CD14-positive monocyte (primary cell): ENCODE measurements at regions of chr6 and their contacts with region 1.

Region 1: DNA sequence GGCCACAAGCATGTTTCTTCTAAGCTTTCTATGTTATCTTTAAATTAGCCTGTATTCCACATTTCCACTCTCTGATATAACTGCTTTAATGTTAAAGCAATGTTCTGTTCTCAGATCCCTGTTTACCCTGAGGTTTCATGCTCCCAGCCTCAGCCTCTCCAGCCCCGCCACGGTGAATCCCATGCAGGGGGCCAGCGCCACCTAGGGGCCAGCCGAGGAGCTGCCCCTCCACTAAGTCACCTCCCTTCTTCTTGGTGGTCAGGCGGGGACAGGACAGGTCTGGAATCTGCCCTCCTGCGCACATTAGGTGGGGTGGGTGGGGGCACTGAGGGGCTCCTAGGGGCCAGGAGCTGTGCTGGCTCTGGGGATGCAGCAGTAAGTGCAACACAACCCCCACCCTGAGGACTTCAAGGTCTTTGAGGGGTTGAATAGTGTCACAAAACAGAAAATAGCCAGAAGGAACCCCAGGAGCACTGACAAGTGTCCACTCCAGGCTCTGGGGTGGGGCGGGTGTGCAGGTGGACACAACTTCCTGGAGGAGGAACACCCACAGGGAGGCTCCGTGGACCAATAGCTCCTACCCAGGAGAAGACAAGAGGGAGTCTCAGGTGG is 61.6 kb downstream of the RAB44 start:
- DNase-seq: peak; percentile 78 to 82 (median 78)
- H3K4me3 ChIP-seq: no peak overlapping the region
- H3K4me3 Mint-ChIP-seq: no peak overlapping the region
- H3K27ac ChIP-seq: no peak overlapping the region
- H3K27ac Mint-ChIP-seq: peak overlapping the region in 5 of 7 donors; percentile 39 to 84 (median 79)
- H3K4me1 ChIP-seq: peaks cover 42 to 44% of the 10 kb centered on the region in 2 donors
- H3K4me1 Mint-ChIP-seq: peaks cover 49% of the 10 kb centered on the region
- H3K27me3 ChIP-seq: no peaks in the 10 kb centered on the region
- H3K27me3 Mint-ChIP-seq: peaks cover 0 to 9% (median 2%) of the 10 kb centered on the region in 3 donors
- CTCF ChIP-seq: peak; percentile 97

Region 2: DNA sequence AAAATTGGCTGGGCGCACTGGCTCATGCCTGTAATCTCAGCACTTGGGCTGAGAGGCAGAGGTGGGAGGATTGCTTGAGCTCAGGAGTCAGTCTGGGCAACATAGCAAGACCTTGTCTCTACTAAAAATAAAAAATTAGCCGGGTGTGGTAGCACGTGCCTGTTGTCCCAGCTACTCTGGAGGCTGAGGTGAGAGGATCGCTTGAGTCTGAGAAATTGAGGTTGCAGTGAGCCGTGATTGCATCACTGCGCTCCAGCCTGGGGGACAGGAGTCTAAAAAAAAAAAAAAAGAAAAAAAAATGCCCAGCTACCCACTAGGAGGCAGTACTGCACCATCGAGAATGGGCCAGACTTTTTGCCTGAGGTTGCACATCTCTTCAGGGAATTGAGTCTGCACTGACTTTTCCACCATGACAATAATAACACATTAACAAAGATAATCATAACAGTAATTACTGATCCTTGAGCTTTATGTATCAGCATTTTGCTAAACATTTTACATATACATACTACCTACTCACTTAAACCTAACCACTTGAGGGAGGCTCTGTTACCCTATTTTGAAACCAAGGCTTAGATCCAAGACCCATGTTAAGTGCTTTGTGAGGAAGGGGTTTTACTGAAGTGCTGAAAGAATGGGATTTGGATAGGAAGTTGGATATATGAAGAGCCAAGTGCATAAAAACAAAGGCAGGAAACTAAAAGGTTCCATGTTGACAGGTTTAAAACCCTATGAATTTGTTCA is 144.1 kb before region 1 on chr6:
- intact Hi-C with region 1: loop called (anchors 2 to 5 kb)
- DNase-seq: peak; percentile 79 to 82 (median 82)
- H3K4me3 ChIP-seq: no peak overlapping the region
- H3K4me3 Mint-ChIP-seq: no peak overlapping the region
- H3K27ac ChIP-seq: no peak overlapping the region
- H3K27ac Mint-ChIP-seq: peak overlapping the region; percentile 28 to 83 (median 71)
- H3K4me1 ChIP-seq: peaks cover 24 to 38% of the 10 kb centered on the region in 2 donors
- H3K4me1 Mint-ChIP-seq: peaks cover 33% of the 10 kb centered on the region
- H3K27me3 ChIP-seq: no peaks in the 10 kb centered on the region
- H3K27me3 Mint-ChIP-seq: no peaks in the 10 kb centered on the region
- CTCF ChIP-seq: peak; percentile 84

Region 3: DNA sequence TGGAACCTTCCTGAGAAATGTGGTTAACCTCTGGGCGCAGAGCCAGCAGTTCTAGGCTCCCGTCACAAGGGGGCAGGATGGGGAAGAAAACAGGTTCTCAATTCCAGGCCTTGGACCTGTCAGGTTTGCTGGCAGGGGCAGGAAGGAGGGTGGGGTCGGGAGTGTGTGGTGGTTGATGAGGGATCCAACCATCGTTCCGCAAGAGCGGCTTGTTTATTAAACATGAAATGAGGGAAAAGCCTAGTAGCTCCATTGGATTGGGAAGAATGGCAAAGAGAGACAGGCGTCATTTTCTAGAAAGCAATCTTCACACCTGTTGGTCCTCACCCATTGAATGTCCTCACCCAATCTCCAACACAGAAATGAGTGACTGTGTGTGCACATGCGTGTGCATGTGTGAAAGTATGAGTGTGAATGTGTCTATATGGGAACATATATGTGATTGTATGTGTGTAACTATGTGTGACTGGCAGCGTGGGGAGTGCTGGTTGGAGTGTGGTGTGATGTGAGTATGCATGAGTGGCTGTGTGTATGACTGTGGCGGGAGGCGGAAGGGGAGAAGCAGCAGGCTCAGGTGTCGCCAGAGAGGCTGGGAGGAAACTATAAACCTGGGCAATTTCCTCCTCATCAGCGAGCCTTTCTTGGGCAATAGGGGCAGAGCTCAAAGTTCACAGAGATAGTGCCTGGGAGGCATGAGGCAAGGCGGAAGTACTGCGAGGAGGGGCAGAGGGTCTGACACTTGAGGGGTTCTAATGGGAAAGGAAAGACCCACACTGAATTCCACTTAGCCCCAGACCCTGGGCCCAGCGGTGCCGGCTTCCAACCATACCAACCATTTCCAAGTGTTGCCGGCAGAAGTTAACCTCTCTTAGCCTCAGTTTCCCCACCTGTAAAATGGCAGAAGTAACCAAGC is 135.5 kb before region 1 on chr6:
- intact Hi-C with region 1: loop called (anchors 2 to 5 kb)
- DNase-seq: peak; percentile 70 to 81 (median 77)
- H3K4me3 ChIP-seq: peak overlapping the region in 1 of 3 experiments; percentile 51
- H3K4me3 Mint-ChIP-seq: peak overlapping the region in 1 of 2 donors; percentile 69
- H3K27ac ChIP-seq: peak overlapping the region in 1 of 2 donors; percentile 72
- H3K27ac Mint-ChIP-seq: peak overlapping the region; percentile 47 to 93 (median 83)
- H3K4me1 ChIP-seq: peaks cover 47 to 54% of the 10 kb centered on the region in 2 donors
- H3K4me1 Mint-ChIP-seq: peaks cover 54% of the 10 kb centered on the region
- H3K27me3 ChIP-seq: no peaks in the 10 kb centered on the region
- H3K27me3 Mint-ChIP-seq: peaks cover 2 to 5% (median 4%) of the 10 kb centered on the region in 3 donors
- CTCF ChIP-seq: peak; percentile 91

Region 4: GRCh38 chr6:36673882-36674281 is 85.4 kb before region 1 on chr6:
- intact Hi-C with region 1: no loop called
- DNase-seq: no peak
- H3K4me3 ChIP-seq: no peak overlapping the region
- H3K4me3 Mint-ChIP-seq: no peak overlapping the region
- H3K27ac ChIP-seq: no peak overlapping the region
- H3K27ac Mint-ChIP-seq: peak overlapping the region in 1 of 7 donors; percentile 42
- H3K4me1 ChIP-seq: peaks cover 24 to 27% of the 10 kb centered on the region in 2 donors
- H3K4me1 Mint-ChIP-seq: peaks cover 24% of the 10 kb centered on the region
- H3K27me3 ChIP-seq: peaks cover 0 to 15% of the 10 kb centered on the region in 2 donors
- H3K27me3 Mint-ChIP-seq: peaks cover 19 to 25% (median 20%) of the 10 kb centered on the region in 3 donors
- CTCF ChIP-seq: no peak

Region 5: DNA sequence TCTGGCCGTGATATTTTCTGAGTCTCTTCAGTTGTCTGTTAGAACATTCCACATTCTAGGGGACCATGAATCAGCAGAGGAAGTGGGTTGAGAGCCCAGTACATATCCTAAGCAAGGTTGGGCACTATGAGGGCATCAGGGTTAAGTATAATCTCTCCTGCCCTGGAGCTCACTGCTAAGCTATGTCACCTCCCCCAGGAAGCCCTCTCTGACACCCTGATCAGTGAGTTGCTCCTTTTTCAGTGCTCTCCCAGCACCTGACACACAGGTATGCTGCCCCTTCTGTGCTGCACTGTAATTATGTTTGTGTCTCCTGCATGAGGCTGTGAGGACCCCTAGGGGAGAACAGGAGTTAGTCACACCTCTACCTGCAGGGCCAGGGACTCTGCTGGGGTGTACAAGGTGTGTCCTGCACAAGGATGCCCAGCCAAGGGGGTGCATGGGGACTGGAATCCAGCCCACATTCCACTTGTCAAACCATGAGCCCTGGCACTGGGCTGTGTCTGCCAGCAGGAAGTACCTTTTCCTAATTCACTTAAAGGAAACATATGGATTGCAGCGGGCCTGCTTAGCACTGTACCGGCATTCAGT is 57.8 kb before region 1 on chr6:
- intact Hi-C with region 1: no loop called
- DNase-seq: peak in 2 of 3 donors; percentile 59 to 64
- H3K4me3 ChIP-seq: peak overlapping the region in 2 of 3 experiments; percentile 1 to 53
- H3K4me3 Mint-ChIP-seq: peak overlapping the region; percentile 67 to 83
- H3K27ac ChIP-seq: peak overlapping the region; percentile 46 to 85
- H3K27ac Mint-ChIP-seq: peak overlapping the region; percentile 93 to 98 (median 97)
- H3K4me1 ChIP-seq: peaks cover 61 to 62% of the 10 kb centered on the region in 2 donors
- H3K4me1 Mint-ChIP-seq: peaks cover 64% of the 10 kb centered on the region
- H3K27me3 ChIP-seq: no peaks in the 10 kb centered on the region
- H3K27me3 Mint-ChIP-seq: peaks cover 0 to 2% (median 0%) of the 10 kb centered on the region in 3 donors
- CTCF ChIP-seq: no peak

Region 6: DNA sequence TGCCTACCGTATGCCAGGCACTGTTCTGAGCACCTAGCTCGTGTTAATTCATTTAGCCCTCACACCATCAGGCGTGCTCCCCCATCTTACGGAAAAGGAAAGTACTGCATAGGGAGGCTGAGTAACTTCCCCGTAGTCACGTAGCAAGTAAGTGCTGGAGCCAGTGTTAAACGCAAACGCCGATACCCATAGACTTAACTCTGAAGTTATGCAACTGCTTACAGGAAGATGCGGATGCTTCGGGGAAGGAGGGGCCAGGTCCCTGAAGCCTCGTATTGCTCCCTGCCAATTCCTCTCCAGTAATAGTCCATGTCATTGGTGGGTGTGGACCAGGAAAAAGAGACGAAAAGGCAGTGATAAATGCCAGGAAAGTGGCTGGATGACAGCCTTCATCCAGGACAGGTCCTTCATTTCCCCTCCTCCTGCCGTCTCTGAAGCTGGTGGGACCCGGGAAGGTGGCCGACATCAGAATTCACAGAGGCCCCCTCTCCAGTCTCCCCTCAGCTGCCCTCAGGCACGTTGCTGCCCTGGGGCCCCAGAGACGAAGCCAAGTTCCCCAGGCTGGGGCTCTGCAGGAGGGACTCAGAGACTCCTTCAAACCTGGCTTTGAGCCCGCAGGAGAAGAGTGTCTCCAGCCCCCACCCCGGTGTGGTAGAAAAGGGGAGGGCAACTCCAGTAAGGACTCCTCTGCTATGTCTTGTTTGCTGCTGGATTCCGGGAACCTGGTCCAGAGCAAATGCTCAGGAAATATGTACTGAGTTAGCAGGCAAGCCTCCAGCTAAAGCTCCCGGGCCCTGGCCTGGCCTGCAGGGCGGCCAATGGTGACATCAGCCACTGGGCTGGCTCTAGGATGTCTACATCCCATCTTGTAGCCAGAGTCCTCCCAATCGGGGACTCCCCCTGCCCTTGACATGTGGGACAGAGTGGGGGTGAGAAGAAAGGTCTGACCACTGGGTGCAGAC is 23.9 kb before region 1 on chr6:
- intact Hi-C with region 1: loop called in 1 of 2 experiments (anchors 2 kb)
- DNase-seq: peak; percentile 86 to 91 (median 87)
- H3K4me3 ChIP-seq: peak overlapping the region in 1 of 3 experiments; percentile 54
- H3K4me3 Mint-ChIP-seq: peak overlapping the region; percentile 72 to 77
- H3K27ac ChIP-seq: peak overlapping the region; percentile 65 to 77
- H3K27ac Mint-ChIP-seq: peak overlapping the region; percentile 88 to 97 (median 96)
- H3K4me1 ChIP-seq: peaks cover 21 to 26% of the 10 kb centered on the region in 2 donors
- H3K4me1 Mint-ChIP-seq: peaks cover 26% of the 10 kb centered on the region
- H3K27me3 ChIP-seq: no peaks in the 10 kb centered on the region
- H3K27me3 Mint-ChIP-seq: peaks cover 1 to 13% (median 5%) of the 10 kb centered on the region in 3 donors
- CTCF ChIP-seq: peak; percentile 56

Region 7: GRCh38 chr6:36820700-36821580 is 61.7 kb after region 1 on chr6:
- intact Hi-C with region 1: no loop called
- DNase-seq: no peak
- H3K4me3 ChIP-seq: no peak overlapping the region
- H3K4me3 Mint-ChIP-seq: no peak overlapping the region
- H3K27ac ChIP-seq: no peak overlapping the region
- H3K27ac Mint-ChIP-seq: peak overlapping the region in 2 of 7 donors; percentile 26 to 36
- H3K4me1 ChIP-seq: no peaks in the 10 kb centered on the region
- H3K4me1 Mint-ChIP-seq: peaks cover 2% of the 10 kb centered on the region
- H3K27me3 ChIP-seq: no peaks in the 10 kb centered on the region
- H3K27me3 Mint-ChIP-seq: peaks cover 3 to 7% (median 7%) of the 10 kb centered on the region in 3 donors
- CTCF ChIP-seq: no peak